SK-N-SH (cell line): ENCODE measurements at regions of chr6 and their contacts with region 1.

Region 1: DNA sequence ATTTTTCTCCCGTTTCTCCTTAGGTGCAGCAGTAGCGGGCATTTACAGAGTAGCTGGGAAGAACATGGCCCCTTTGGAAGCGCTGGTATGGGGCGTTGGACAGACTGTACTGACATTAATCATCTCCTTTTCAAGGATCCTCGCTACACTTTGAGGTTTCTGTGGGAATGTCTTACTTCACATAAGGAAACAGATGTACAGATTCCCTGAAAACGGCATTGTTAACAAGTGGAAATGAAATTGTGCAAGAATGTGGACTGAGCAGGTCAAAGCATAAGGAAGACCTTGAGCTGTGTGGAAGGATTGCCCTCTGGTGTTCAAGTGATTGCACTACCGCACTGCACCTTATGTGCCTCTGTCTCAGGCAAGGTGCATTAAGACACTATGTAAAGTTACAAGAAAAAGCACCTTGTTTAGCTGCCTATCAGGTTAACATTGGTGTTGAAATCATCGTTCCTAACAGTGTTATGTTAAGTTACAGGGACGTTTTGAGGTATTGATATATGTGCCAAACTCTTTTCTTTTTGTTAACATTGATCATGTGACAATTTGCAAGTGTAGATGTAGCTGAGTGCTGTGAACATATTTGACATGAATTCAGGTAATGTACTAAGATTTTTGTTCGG is 38.0 kb downstream of the TMEM170B start:
- DNase-seq: peak; percentile 46
- H3K4me3 ChIP-seq: no peak overlapping the region
- H3K27ac ChIP-seq: no peak overlapping the region; a peak in 1 of 4 replicates
- H3K4me1 ChIP-seq: peaks cover 0 to 3% of the 10 kb centered on the region in 2 experiments; a peak in 2 of 4 replicates
- H3K27me3 ChIP-seq: no peaks in the 10 kb centered on the region
- CTCF ChIP-seq: peak; percentile 93
- EP300 ChIP-seq: no peak
- RAD21 ChIP-seq: peak; percentile 92

Region 2: GRCh38 chr6:11144393-11144851 is 431.1 kb before region 1 on chr6:
- CTCF ChIA-PET with region 1: interaction called, 12 read pairs
- POLR2A ChIA-PET with region 1: no interaction called
- DNase-seq: peak; percentile 76
- H3K4me3 ChIP-seq: peak overlapping the region in 1 of 2 experiments; percentile 32; a peak in 1 of 4 replicates
- H3K27ac ChIP-seq: peak overlapping the region in 1 of 2 experiments; percentile 36; a peak in 1 of 4 replicates
- H3K4me1 ChIP-seq: peaks cover 5 to 7% of the 10 kb centered on the region in 2 experiments; a peak in 3 of 4 replicates
- H3K27me3 ChIP-seq: no peaks in the 10 kb centered on the region
- CTCF ChIP-seq: peak; percentile 98
- EP300 ChIP-seq: no peak
- RAD21 ChIP-seq: peak; percentile 96

Region 3: DNA sequence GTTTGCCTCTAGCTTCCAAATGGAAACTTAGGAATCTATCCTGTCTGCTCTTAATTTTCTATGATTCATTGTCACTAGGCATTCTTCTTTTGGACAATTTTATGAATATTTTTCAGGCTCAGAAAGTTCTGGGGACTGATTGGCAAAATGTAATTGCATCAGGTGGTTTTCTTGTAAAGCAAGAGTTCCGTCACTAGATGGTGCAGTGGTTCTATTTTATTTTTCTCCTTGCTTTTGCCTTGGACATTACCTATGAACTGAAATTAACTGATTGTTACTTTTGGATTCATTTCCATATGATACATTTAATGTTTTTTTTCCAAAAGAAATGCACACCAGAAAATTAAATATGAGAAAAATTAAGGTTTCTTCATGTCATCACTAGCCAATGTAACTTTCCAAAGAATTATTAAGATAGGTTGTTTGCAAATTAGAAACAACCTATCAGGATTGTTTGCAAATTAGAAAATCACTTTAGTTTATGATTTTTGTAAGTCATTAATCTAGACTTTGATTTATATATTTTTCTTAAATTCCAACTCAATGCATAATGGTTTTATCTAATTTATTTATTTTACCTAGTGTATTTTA is 10.0 kb after region 1 on chr6:
- CTCF ChIA-PET with region 1: interaction called, 31 read pairs
- POLR2A ChIA-PET with region 1: no interaction called
- DNase-seq: peak; percentile 51
- H3K4me3 ChIP-seq: no peak overlapping the region
- H3K27ac ChIP-seq: no peak overlapping the region; a peak in 1 of 4 replicates
- H3K4me1 ChIP-seq: peaks cover 0 to 8% of the 10 kb centered on the region in 2 experiments; a peak in 2 of 4 replicates
- H3K27me3 ChIP-seq: no peaks in the 10 kb centered on the region
- CTCF ChIP-seq: peak; percentile 81
- EP300 ChIP-seq: no peak
- RAD21 ChIP-seq: peak; percentile 85